ENCODE measurements at regions of chr2 and their contacts with region 1.

Region 1: GRCh38 chr2:133241224-133241571 is 327.1 kb downstream of the NCKAP5 start:
- DNase-seq: peak; percentile 91
- ATAC-seq: peak; percentile 81
- H3K4me3 ChIP-seq: peak overlapping the region; percentile 45
- H3K27ac ChIP-seq: no peak overlapping the region
- H3K4me1 ChIP-seq: peaks cover 15% of the 10 kb centered on the region
- H3K27me3 ChIP-seq: no peaks in the 10 kb centered on the region
- CTCF ChIP-seq: no peak
- POLR2A ChIP-seq: no peak
- RAD21 ChIP-seq: no peak

Region 2: DNA sequence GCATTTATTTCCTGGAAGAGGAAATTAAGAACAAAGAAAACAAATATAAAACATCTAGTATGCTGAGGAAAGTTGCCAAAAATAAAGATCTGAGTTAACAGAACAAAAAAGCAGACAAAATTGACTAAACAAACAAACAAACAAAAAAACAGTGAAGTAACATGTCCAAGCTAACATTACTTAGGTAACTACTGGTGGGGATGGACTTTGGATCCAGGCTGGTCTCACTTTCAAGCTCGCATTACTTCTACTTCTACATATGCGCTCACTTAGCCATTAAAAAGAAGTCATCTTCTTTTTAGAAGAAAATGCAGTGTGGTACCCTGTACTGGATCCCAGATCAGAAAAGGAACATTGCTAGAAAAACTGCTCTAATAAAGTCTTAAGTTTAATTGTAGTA is 31.9 kb before region 1 on chr2:
- CTCF ChIA-PET with region 1: no interaction called
- POLR2A ChIA-PET with region 1: no interaction called
- dilution Hi-C with region 1: no loop called
- in situ Hi-C with region 1: no loop called
- intact Hi-C with region 1: loop called (anchors 5 kb)
- DNase-seq: no peak
- ATAC-seq: no peak
- H3K4me3 ChIP-seq: no peak overlapping the region
- H3K27ac ChIP-seq: no peak overlapping the region
- H3K4me1 ChIP-seq: peaks cover 2% of the 10 kb centered on the region; the same call in 1 of the 2 replicates
- H3K27me3 ChIP-seq: no peaks in the 10 kb centered on the region
- CTCF ChIP-seq: no peak
- POLR2A ChIP-seq: no peak
- RAD21 ChIP-seq: no peak

Region 3: DNA sequence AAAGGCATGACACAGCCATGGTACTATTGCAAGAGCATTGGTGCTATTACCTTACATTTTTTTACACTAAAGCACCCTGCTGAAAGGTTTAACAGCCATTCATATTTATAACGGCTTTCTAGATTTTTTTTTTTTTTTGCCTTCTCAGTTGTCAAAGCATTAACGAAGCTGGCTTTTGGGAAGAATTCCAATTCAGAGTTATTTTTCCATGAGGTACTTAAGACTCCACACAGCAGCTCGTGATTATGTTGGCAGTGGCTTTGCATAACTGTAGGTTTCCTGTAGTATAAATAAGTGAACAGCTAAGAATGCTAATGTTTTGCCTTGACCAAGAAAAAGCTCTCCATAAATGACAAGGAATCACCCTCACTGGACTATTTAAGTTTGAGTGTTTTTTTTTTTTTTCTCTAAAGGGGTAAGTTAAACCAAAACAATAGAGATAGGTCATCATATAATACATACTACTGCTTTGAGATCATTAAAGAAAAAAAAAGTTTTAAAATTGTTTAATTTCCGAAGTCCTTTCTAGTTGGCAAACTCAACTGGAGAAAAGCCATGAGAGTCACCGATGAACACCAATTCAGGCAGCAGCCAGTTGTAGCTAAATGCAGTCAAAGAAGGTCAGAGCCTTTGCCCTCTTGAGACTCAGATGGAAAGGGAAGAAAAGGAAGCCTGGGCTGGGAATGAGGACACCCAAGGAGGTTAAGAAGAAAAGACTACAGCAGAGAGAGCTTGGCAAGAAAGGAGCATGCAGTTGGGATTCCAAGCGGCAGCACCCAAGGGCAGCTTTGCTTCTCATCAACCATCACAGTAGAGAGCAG is 514.5 kb after region 1 on chr2:
- CTCF ChIA-PET with region 1: no interaction called
- POLR2A ChIA-PET with region 1: interaction called, 10 read pairs
- dilution Hi-C with region 1: no loop called
- in situ Hi-C with region 1: no loop called
- intact Hi-C with region 1: no loop called
- DNase-seq: peak; percentile 100
- ATAC-seq: peak; percentile 88
- H3K4me3 ChIP-seq: no peak overlapping the region
- H3K27ac ChIP-seq: peak overlapping the region; percentile 95
- H3K4me1 ChIP-seq: peaks cover 17% of the 10 kb centered on the region
- H3K27me3 ChIP-seq: no peaks in the 10 kb centered on the region
- CTCF ChIP-seq: no peak
- POLR2A ChIP-seq: no peak
- RAD21 ChIP-seq: no peak

Region 4: DNA sequence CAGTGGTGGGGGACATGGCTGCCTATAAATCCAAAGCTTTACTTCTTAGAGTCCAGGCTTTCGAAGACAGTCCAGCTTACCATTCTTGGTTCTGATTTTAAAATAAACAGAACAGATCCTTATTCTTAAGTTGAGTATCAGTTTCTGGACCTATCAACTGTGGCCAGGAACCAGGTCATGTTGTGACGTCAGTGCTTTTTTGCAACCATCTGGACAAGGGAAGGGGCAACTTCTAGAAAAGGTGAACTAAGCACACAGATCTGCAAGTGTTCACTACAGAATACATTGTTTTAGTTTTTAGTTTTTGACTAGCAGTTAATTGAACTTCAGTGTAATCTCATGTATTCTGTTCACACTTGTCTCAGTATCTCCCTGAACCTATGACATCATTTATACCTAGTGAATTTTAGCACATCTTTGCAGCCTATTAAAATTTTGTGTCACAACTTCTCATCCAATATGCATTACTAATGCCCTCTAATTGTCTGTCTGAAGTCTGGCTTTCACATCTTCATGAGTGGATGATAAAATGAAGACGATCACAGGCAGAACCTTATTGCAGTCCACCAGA is 686.8 kb after region 1 on chr2:
- CTCF ChIA-PET with region 1: no interaction called
- POLR2A ChIA-PET with region 1: no interaction called
- dilution Hi-C with region 1: no loop called
- in situ Hi-C with region 1: no loop called
- intact Hi-C with region 1: no loop called
- DNase-seq: no peak
- ATAC-seq: no peak
- H3K4me3 ChIP-seq: no peak overlapping the region
- H3K27ac ChIP-seq: no peak overlapping the region
- H3K4me1 ChIP-seq: 0 out of 2 replicates have a peak, but pooled peaks cover 2% of the 10 kb centered on the region
- H3K27me3 ChIP-seq: peaks cover 10% of the 10 kb centered on the region
- CTCF ChIP-seq: no peak
- POLR2A ChIP-seq: no peak
- RAD21 ChIP-seq: no peak

Measured in IMR-90 (cell line).